Activated T-helper 1 cell treated with anti-CD3 and anti-CD28 coated beads, Interleukin-12 subunit alpha, Interleukin-12 subunit beta, Interleukin-2, Interleukin-4 antibody, amounts not matched to agents 30 ng/mL and 10 ng/mL and 1 ng/mL, durations not matched to agents 14 hours and 24 hours and 36 hours (primary cell): ENCODE measurements at regions of chr19 and their contacts with region 1.

Region 1: GRCh38 chr19:41959056-41960053 is at the start of gene RABAC1:
- DNase-seq: peak; percentile 87
- H3K4me3 Mint-ChIP-seq: peak within 1 kb of the TSS; percentile 88
- H3K27ac Mint-ChIP-seq: peak within 1 kb of the TSS; percentile 90
- H3K4me1 Mint-ChIP-seq: peaks cover 17% of the 10 kb centered on the region
- H3K27me3 Mint-ChIP-seq: peaks cover 2% of the 10 kb centered on the region
- total RNA-seq, gene RABAC1: 36.2 and 41.3 TPM in 2 replicates

Region 2: GRCh38 chr19:41859618-41860418 is 99.5 kb before region 1 on chr19 and contains the start of gene RPS19:
- intact Hi-C with region 1: loop called (anchors 1 kb)
- DNase-seq: peak; percentile 97
- H3K4me3 Mint-ChIP-seq: peak within 1 kb of the TSS; percentile 95
- H3K27ac Mint-ChIP-seq: peak within 1 kb of the TSS; percentile 97
- H3K4me1 Mint-ChIP-seq: peaks cover 39% of the 10 kb centered on the region
- H3K27me3 Mint-ChIP-seq: peaks cover 9% of the 10 kb centered on the region
- total RNA-seq, gene RPS19: 2,887 and 2,906 TPM in 2 replicates

Region 3: GRCh38 chr19:41872775-41873647 is 86.3 kb before region 1 on chr19:
- intact Hi-C with region 1: loop called (anchors 1 kb)
- DNase-seq: peak; percentile 49
- H3K4me3 Mint-ChIP-seq: peak overlapping the region; percentile 29
- H3K27ac Mint-ChIP-seq: peak overlapping the region; percentile 88
- H3K4me1 Mint-ChIP-seq: peaks cover 84% of the 10 kb centered on the region
- H3K27me3 Mint-ChIP-seq: no peaks in the 10 kb centered on the region

Region 4: GRCh38 chr19:41945135-41945766 is 14.1 kb before region 1 on chr19:
- intact Hi-C with region 1: loop called (anchors 2 kb)
- DNase-seq: peak; percentile 70
- H3K4me3 Mint-ChIP-seq: peak overlapping the region; percentile 71
- H3K27ac Mint-ChIP-seq: peak overlapping the region; percentile 94
- H3K4me1 Mint-ChIP-seq: peaks cover 54% of the 10 kb centered on the region
- H3K27me3 Mint-ChIP-seq: peaks cover 7% of the 10 kb centered on the region

Region 5: DNA sequence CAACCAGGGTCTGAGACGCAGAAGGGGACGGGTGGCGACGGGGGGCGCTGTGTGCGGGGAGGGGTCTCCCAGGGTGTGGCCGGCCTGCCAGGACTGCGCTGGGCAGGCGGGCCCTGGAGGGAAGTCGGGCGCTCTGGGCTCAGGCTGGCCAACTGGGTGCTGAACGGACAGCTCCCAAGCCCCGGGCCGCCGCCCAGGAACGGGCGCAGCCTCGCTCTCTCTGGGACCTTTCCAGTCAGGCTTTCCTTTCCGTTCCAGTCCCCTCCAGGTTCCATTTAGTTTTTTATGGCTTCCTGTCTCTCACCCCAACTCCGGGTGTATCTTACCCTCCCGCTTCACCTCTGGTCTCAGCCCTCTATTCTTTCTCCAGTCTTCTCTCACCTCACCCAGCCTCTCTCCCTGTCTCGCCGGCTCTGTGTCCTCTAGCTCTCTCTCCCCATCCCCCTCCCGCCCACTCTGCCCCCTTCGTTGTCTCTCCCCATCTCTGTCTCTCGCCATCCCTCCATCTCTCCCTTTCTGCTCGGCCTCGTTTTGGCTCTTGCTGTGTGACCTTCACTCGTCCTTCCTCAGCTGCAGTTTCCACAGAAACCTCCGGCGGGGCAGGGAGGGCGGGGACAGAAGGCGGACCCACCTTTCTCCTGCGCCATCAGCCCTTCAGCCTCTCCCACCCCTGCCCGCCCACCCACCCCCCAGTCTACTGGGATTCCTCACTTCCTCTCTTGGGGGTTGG is 37.9 kb after region 1 on chr19:
- intact Hi-C with region 1: loop called (anchors 1 kb)
- DNase-seq: peak; percentile 12
- H3K4me3 Mint-ChIP-seq: no peak overlapping the region
- H3K27ac Mint-ChIP-seq: no peak overlapping the region
- H3K4me1 Mint-ChIP-seq: peaks cover 28% of the 10 kb centered on the region
- H3K27me3 Mint-ChIP-seq: peaks cover 58% of the 10 kb centered on the region

Region 6: DNA sequence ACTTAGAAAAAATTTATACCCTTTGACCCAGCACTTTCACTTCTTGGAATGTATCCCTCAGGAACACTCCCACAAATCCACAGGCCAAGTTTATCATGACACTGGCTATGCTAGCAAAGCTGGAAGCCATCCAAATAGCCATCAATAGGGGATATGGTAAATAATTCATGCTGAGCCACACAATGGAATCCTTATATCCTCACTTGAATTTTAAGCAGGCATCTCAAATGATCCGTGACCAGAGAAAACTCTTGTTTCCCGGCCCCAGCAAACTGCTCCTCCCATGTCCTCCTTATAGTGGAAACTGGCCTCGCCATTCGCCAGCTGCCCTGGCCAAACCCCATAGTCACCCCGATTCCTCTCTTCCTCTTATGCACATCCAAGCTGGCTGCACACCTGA is 73.1 kb after region 1 on chr19:
- intact Hi-C with region 1: loop called (anchors 1 kb)
- DNase-seq: no peak
- H3K4me3 Mint-ChIP-seq: no peak overlapping the region
- H3K27ac Mint-ChIP-seq: no peak overlapping the region
- H3K4me1 Mint-ChIP-seq: peaks cover 8% of the 10 kb centered on the region
- H3K27me3 Mint-ChIP-seq: peaks cover 9% of the 10 kb centered on the region

Region 7: GRCh38 chr19:42057846-42058245 is 98.5 kb after region 1 on chr19:
- intact Hi-C with region 1: no loop called
- DNase-seq: no peak
- H3K4me3 Mint-ChIP-seq: no peak overlapping the region
- H3K27ac Mint-ChIP-seq: no peak overlapping the region
- H3K4me1 Mint-ChIP-seq: no peaks in the 10 kb centered on the region
- H3K27me3 Mint-ChIP-seq: peaks cover 3% of the 10 kb centered on the region

Region 8: DNA sequence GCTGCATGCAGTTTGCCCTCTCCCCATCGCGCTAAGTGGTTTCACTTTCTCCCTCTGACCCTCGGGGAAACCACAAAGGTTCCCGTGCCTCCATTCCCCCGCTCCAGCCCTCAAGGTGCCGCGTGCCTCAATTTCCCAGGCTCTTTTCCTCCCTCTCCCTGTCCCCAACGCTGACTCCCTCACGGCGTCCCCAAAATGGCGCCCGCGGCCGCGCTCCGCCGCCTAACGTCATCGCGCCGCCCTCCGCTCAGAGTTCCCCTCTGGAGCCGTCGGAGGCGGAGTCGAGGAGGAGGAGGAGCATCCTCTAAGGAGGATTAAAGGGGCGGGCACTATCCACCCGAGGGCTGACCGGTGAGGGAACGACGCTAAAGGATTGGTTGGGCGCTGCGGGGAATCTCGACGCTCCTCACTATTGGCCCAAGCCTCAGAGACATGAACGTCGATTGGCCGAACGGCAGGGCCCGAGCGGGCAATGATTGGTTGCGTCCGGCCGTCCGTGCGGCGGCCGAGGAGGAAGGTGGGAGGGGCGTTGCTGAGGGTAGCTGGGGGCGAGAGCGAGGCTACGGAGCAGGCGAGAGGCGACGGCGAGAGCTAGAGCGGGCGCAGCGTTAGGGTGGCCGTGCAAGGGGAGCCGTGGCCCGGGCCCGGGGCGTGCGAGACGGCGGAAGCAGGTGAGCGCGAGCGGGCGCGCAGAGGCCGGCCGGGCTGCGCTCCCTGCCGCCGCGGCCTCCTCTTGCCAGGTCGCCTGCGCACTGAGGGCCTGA is 116.4 kb after region 1 on chr19 and contains the start of gene ZNF574:
- intact Hi-C with region 1: loop called (anchors 1 kb)
- DNase-seq: peak; percentile 97
- H3K4me3 Mint-ChIP-seq: peak within 1 kb of the TSS; percentile 97
- H3K27ac Mint-ChIP-seq: peak within 1 kb of the TSS; percentile 99
- H3K4me1 Mint-ChIP-seq: peaks cover 37% of the 10 kb centered on the region
- H3K27me3 Mint-ChIP-seq: peaks cover 1% of the 10 kb centered on the region
- total RNA-seq, gene ZNF574: 17.5 and 17.8 TPM in 2 replicates